ENCODE measurements at regions of chr2 and their contacts with region 1.

Region 1: DNA sequence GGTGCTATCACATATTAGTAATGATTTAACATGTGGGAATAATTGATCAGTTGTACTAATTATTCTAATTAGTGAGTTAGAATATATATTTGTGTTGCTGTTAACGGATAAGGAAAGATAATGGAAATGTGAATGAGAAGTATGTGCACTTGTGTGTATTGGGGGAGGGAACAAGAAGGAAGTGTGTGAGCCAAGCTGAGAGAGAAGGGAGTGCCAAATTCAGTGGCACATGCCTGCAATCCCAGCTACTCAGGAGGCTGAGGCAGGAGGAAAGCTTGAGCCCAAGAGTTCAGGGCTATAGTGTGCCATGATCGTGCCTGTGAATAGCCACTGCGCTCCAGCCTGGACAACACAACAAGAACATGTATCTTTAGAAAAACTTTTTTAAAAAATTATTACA is 9.3 kb downstream of the BARD1 start:
- DNase-seq: no peak
- H3K4me3 ChIP-seq: no peak overlapping the region
- H3K27ac ChIP-seq: no peak overlapping the region
- H3K4me1 ChIP-seq: 0 out of 2 replicates have a peak, but pooled peaks cover 1% of the 10 kb centered on the region
- H3K27me3 ChIP-seq: no peaks in the 10 kb centered on the region
- CTCF ChIP-seq: no peak

Region 2: DNA sequence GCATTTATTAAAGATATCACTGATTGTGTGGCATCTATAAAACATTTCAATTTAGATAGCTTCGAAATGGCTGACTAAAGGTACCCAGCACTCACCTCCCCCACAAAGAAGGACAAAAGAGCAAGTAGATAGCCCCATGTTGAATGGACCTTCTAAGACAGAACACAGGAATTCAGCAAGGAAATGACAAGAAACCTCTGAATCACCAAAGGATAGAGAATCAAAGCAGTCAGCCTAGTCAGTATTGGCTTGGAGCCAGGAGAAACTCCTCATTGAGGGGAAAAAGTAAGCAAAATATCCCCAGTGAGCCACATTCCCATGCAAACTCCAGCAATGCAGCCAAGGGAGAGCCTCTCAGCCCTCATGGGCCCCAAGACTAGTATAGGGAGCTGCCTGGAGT is 104.4 kb before region 1 on chr2:
- CTCF ChIA-PET with region 1: no interaction called
- POLR2A ChIA-PET with region 1: no interaction called
- intact Hi-C with region 1: no loop called
- DNase-seq: no peak
- H3K4me3 ChIP-seq: no peak overlapping the region
- H3K27ac ChIP-seq: no peak overlapping the region
- H3K4me1 ChIP-seq: no peaks in the 10 kb centered on the region
- H3K27me3 ChIP-seq: no peaks in the 10 kb centered on the region
- CTCF ChIP-seq: no peak

Region 3: GRCh38 chr2:214781226-214781625 is 19.0 kb before region 1 on chr2:
- CTCF ChIA-PET with region 1: no interaction called
- POLR2A ChIA-PET with region 1: no interaction called
- intact Hi-C with region 1: loop called (anchors 2 kb)
- DNase-seq: no peak
- H3K4me3 ChIP-seq: no peak overlapping the region
- H3K27ac ChIP-seq: no peak overlapping the region
- H3K4me1 ChIP-seq: no peaks in the 10 kb centered on the region
- H3K27me3 ChIP-seq: no peaks in the 10 kb centered on the region
- CTCF ChIP-seq: no peak